ENCODE measurements at regions of chr3 and their contacts with region 1.

Region 1: GRCh38 chr3:158644345-158644908 is at the start of gene GFM1:
- DNase-seq: peak; percentile 88 to 93 (median 91)
- H3K4me3 ChIP-seq: peak within 1 kb of the TSS; percentile 69 to 87
- H3K4me3 Mint-ChIP-seq: peak within 1 kb of the TSS; percentile 92 to 100 (median 98)
- H3K27ac ChIP-seq: peak within 1 kb of the TSS; percentile 84
- H3K27ac Mint-ChIP-seq: peak within 1 kb of the TSS; percentile 40 to 98 (median 96)
- H3K4me1 ChIP-seq: peaks cover 34% of the 10 kb centered on the region
- H3K4me1 Mint-ChIP-seq: peaks cover 33 to 59% (median 42%) of the 10 kb centered on the region in 4 donors
- H3K27me3 ChIP-seq: no peaks in the 10 kb centered on the region
- H3K27me3 Mint-ChIP-seq: no peaks in the 10 kb centered on the region
- total RNA-seq, gene GFM1: 42.7 to 44.2 TPM

Region 2: DNA sequence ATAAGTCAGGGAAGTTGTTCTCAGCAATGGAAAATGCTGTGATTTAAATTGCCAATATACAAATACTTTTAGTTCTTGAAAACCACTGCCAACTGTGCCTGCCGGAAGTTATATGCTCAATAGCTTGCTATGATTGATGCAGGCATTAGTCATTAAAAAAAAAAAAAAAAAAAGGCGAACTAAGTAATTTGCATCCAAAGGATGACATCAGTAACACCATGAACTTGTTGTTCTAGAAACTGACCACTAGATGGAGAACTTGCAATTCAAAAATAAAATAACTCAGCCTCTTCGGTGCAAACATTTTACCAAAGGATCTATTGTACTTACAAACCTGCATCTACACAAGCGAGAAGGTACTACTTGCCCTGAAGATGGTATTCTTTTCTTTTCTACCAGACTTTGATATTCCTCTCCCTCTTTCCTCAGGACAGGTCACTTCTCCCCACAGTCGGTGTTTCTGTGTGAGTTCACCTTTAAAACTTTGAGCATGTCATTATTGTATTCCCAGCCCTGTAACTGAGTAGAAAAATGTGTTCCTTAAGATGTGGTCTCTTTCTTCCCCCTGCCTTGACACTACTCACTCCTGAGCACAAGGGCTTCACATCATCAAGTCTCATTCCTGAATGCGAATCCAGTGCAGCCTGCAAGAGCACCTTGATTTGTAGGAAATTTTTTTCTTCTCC is 1026.2 kb before region 1 on chr3:
- CTCF ChIA-PET with region 1: no interaction called
- POLR2A ChIA-PET with region 1: no interaction called
- intact Hi-C with region 1: loop called (anchors 2 kb)
- DNase-seq: peak in 4 of 5 donors; percentile 28 to 47 (median 44)
- H3K4me3 ChIP-seq: no peak overlapping the region
- H3K4me3 Mint-ChIP-seq: peak overlapping the region in 1 of 8 donors; percentile 24
- H3K27ac ChIP-seq: no peak overlapping the region
- H3K27ac Mint-ChIP-seq: peak overlapping the region in 1 of 7 donors; percentile 33
- H3K4me1 ChIP-seq: peaks cover 7% of the 10 kb centered on the region
- H3K4me1 Mint-ChIP-seq: peaks cover 3 to 6% (median 4%) of the 10 kb centered on the region in 4 donors
- H3K27me3 ChIP-seq: no peaks in the 10 kb centered on the region
- H3K27me3 Mint-ChIP-seq: peaks cover 9 to 11% of the 10 kb centered on the region in 2 donors

Region 3: DNA sequence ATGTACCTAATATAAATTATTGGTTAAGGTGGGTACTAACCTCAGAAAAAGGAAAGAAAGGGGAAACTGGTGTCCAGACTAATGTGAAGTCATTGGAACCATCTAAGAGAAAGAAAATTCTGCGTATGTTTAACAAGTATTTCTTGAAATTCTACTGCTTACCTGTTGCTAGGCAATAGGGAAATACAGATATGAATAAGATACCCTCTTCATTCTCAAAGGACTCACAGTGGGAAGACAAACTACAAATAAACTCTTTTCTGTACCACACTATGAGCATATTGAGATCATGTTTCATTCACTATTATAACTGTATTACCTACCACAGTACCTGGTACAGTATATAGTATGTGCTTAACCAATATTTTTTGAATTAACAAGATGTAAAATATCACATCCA is 214.0 kb before region 1 on chr3:
- CTCF ChIA-PET with region 1: no interaction called
- POLR2A ChIA-PET with region 1: no interaction called
- intact Hi-C with region 1: no loop called
- DNase-seq: no peak
- H3K4me3 ChIP-seq: no peak overlapping the region
- H3K4me3 Mint-ChIP-seq: no peak overlapping the region
- H3K27ac ChIP-seq: no peak overlapping the region
- H3K27ac Mint-ChIP-seq: no peak overlapping the region
- H3K4me1 ChIP-seq: no peaks in the 10 kb centered on the region
- H3K4me1 Mint-ChIP-seq: no peaks in the 10 kb centered on the region
- H3K27me3 ChIP-seq: no peaks in the 10 kb centered on the region
- H3K27me3 Mint-ChIP-seq: no peaks in the 10 kb centered on the region

Region 4: DNA sequence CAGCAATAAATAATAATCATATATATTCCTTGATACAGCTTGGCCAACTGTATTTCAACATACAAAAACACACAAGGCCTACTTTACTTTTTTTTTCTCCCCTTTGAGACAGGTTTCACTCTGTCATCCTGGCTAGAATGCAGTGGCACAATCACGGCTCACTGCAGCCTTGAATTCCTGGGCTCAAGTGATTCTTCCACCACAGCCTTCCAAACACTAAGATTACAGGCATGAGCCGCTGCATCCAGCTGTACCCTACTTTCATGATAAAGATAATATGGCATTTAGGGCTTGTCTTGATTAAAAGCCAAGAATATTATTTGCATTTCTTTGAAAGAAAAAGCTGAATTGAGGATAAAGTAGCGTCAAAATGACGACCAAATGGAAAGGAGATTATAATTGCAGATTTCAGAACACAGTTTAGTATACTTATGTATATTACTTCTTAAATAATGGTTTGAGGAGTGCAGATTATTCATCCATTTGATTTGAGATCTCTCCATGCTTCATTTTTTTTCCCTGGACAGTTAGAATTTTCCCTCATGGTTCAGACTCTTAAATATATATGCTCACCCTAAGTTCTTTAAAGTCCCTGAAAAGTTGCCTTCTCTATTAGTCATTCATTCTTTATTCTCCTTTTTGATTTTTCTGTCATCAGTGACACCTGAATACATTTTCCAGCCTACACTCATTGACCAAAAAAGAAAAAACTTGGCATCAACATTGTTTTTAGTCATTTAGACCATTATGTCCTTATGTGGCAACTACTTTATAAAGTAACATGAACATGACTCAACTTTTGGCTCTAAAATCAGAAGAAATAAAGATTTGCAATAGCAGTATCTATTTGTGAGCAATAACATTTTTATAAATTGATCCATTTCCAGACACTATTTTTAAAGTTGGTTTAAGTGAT is 121.9 kb before region 1 on chr3:
- CTCF ChIA-PET with region 1: no interaction called
- POLR2A ChIA-PET with region 1: no interaction called
- intact Hi-C with region 1: no loop called
- DNase-seq: no peak
- H3K4me3 ChIP-seq: no peak overlapping the region
- H3K4me3 Mint-ChIP-seq: no peak overlapping the region
- H3K27ac ChIP-seq: no peak overlapping the region
- H3K27ac Mint-ChIP-seq: no peak overlapping the region
- H3K4me1 ChIP-seq: no peaks in the 10 kb centered on the region
- H3K4me1 Mint-ChIP-seq: no peaks in the 10 kb centered on the region
- H3K27me3 ChIP-seq: no peaks in the 10 kb centered on the region
- H3K27me3 Mint-ChIP-seq: no peaks in the 10 kb centered on the region

Region 5: GRCh38 chr3:158539414-158540014 is 104.9 kb before region 1 on chr3:
- CTCF ChIA-PET with region 1: interaction called, 8 read pairs
- POLR2A ChIA-PET with region 1: no interaction called
- intact Hi-C with region 1: loop called (anchors 2 kb)
- DNase-seq: peak in 4 of 5 donors; percentile 21 to 38 (median 34)
- H3K4me3 ChIP-seq: no peak overlapping the region
- H3K4me3 Mint-ChIP-seq: no peak overlapping the region
- H3K27ac ChIP-seq: no peak overlapping the region
- H3K27ac Mint-ChIP-seq: no peak overlapping the region
- H3K4me1 ChIP-seq: no peaks in the 10 kb centered on the region
- H3K4me1 Mint-ChIP-seq: peaks cover 0 to 1% (median 0%) of the 10 kb centered on the region in 4 donors
- H3K27me3 ChIP-seq: no peaks in the 10 kb centered on the region
- H3K27me3 Mint-ChIP-seq: no peaks in the 10 kb centered on the region

Region 6: GRCh38 chr3:158659454-158660237 is 15.2 kb after region 1 on chr3:
- CTCF ChIA-PET with region 1: interaction called, 68 read pairs
- POLR2A ChIA-PET with region 1: interaction called, 14 read pairs
- intact Hi-C with region 1: no loop called
- DNase-seq: peak in 4 of 5 donors; percentile 48 to 55 (median 51)
- H3K4me3 ChIP-seq: no peak overlapping the region
- H3K4me3 Mint-ChIP-seq: no peak overlapping the region
- H3K27ac ChIP-seq: no peak overlapping the region
- H3K27ac Mint-ChIP-seq: peak overlapping the region in 6 of 7 donors; percentile 13 to 80 (median 37)
- H3K4me1 ChIP-seq: no peaks in the 10 kb centered on the region
- H3K4me1 Mint-ChIP-seq: peaks cover 5 to 9% (median 7%) of the 10 kb centered on the region in 4 donors
- H3K27me3 ChIP-seq: no peaks in the 10 kb centered on the region
- H3K27me3 Mint-ChIP-seq: no peaks in the 10 kb centered on the region

Region 7: GRCh38 chr3:158801696-158802408 is 157.4 kb after region 1 on chr3 and contains the start of gene MFSD1:
- CTCF ChIA-PET with region 1: interaction called, 19 read pairs
- POLR2A ChIA-PET with region 1: interaction called, 13 read pairs
- intact Hi-C with region 1: loop called (anchors 5 kb)
- DNase-seq: peak; percentile 86 to 92 (median 88)
- H3K4me3 ChIP-seq: peak within 1 kb of the TSS; percentile 68 to 98
- H3K4me3 Mint-ChIP-seq: peak within 1 kb of the TSS; percentile 89 to 93 (median 92)
- H3K27ac ChIP-seq: peak within 1 kb of the TSS; percentile 63
- H3K27ac Mint-ChIP-seq: peak within 1 kb of the TSS; percentile 71 to 97 (median 94)
- H3K4me1 ChIP-seq: peaks cover 36% of the 10 kb centered on the region
- H3K4me1 Mint-ChIP-seq: peaks cover 24 to 41% (median 35%) of the 10 kb centered on the region in 4 donors
- H3K27me3 ChIP-seq: no peaks in the 10 kb centered on the region
- H3K27me3 Mint-ChIP-seq: no peaks in the 10 kb centered on the region
- total RNA-seq, gene MFSD1: 31.7 to 33.7 TPM

Measured in CD4-positive, alpha-beta memory T cell (primary cell).